ENCODE measurements at regions of chr6 and their contacts with region 1.

Region 1: DNA sequence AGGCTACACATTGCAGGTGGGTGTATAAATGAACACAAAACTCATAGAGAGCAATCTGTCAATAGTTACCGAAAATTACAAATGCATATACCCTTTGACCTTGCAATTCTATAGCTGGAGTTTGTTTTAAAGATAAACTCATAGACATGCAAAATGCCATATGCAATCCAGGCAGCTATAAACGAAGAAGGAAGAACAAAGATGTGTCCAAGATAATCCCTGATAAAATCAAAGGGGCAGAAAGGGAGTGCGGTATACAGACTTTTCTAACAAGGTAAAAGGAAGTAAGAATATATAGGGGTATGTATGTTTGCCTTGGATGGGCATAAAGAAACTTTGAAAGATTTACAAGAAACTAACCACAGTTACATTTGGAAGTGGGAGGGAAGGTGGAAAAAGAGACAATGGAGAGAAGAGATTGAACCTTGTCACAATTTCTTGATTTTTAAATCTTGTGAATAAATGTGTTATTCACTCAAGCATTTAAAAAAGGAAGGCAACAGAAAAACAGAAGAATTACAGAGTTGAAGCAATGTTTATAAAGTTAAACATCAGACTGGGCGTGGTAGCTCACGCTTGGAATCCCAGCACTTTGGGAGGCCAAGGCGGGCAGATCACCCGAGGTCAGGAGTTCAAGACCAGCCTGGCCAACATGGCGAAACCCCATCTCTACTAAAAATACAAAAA is 29.9 kb downstream of the FAM8A1 start:
- DNase-seq: no peak
- H3K4me3 ChIP-seq: no peak overlapping the region
- H3K27ac ChIP-seq: no peak overlapping the region
- H3K4me1 ChIP-seq: no peaks in the 10 kb centered on the region
- H3K27me3 ChIP-seq: no peaks in the 10 kb centered on the region
- CTCF ChIP-seq: no peak

Region 2: DNA sequence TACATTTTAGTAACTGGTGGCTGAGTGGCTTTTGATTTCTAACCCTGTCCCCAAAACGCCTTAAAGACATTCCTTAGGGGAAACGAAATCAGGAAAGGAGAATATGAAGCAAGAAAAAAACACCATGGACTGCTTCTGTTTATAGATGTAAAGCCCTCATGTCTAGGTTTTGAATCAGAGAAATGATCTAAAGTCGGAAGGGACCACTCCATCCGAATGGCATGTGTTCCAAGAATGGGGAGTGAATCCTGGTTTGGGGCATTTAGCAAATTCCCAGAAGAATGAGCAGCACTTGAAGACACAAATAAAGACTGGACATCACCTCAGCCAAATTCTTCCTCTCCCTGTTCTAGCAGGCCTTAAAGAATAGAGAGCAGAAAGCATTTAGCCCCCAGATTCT is 171.0 kb before region 1 on chr6:
- CTCF ChIA-PET with region 1: no interaction called
- dilution Hi-C with region 1: no loop called
- in situ Hi-C with region 1: no loop called
- intact Hi-C with region 1: no loop called
- DNase-seq: no peak
- H3K4me3 ChIP-seq: no peak overlapping the region
- H3K27ac ChIP-seq: no peak overlapping the region
- H3K4me1 ChIP-seq: no peaks in the 10 kb centered on the region
- H3K27me3 ChIP-seq: no peaks in the 10 kb centered on the region
- CTCF ChIP-seq: no peak

Region 3: GRCh38 chr6:17484201-17484849 is 145.6 kb before region 1 on chr6:
- CTCF ChIA-PET with region 1: no interaction called
- dilution Hi-C with region 1: no loop called
- in situ Hi-C with region 1: no loop called
- intact Hi-C with region 1: no loop called
- DNase-seq: no peak
- H3K4me3 ChIP-seq: no peak overlapping the region
- H3K27ac ChIP-seq: no peak overlapping the region
- H3K4me1 ChIP-seq: no peaks in the 10 kb centered on the region
- H3K27me3 ChIP-seq: no peaks in the 10 kb centered on the region
- CTCF ChIP-seq: no peak

Region 4: DNA sequence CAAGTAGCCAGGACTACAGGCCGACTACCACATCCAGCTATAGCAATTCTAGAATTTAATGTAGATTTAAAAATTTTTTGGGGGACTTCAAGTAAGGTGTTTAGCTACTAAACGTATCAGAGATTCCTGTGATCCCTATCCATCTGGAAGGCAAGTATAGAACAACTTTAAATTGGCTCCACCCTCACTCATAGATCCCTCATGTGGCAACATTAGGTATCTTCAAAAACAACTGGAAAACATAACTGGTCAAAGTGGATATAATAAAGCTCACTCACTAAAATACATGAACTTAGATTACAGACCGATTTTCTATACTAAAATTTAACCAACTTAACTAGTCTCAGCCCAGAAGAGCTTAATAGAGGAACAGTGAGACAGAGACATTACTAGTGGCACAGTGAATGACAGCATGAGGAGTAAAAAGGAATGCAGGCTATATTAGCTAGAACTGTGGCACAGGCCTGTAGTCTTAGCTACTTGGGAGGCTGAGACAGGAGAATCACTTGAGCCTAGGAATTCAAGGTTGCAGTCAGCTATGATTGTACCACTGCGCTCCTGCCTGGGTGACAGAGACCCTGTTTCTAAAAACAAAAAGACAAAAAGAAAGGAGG is 62.1 kb after region 1 on chr6:
- CTCF ChIA-PET with region 1: interaction called, 16 read pairs
- dilution Hi-C with region 1: no loop called
- in situ Hi-C with region 1: no loop called
- intact Hi-C with region 1: no loop called
- DNase-seq: no peak
- H3K4me3 ChIP-seq: no peak overlapping the region
- H3K27ac ChIP-seq: no peak overlapping the region
- H3K4me1 ChIP-seq: no peaks in the 10 kb centered on the region
- H3K27me3 ChIP-seq: no peaks in the 10 kb centered on the region
- CTCF ChIP-seq: no peak